Ovary (tissue), 10 donors: ENCODE measurements at regions of chr13 and their contacts with region 1.

Region 1: DNA sequence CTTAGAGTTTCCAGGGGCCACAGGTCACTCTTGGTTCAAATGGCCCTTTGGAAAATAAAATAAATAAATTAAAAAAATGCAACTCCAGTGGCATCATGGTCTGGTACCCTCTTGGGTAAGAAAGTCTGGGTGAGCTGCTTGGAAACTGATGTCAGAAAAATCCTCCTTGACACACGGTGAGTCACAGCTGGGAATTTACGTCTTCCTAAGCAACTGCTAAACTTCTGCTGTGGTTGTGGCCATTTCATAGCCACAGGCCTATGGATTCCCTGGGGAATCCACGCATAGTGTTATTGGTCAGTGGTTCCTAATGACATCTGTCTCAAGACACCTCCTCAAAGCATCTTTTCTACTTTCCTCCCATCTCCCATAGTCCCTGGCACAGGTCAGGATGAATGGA is 220.8 kb downstream of the COG6 start:
- DNase-seq: no peak
- H3K4me3 ChIP-seq: no peak overlapping the region
- H3K27ac ChIP-seq: peak overlapping the region in 1 of 2 donors; percentile 11
- H3K4me1 ChIP-seq: peaks cover 12% of the 10 kb centered on the region
- H3K27me3 ChIP-seq: no peaks in the 10 kb centered on the region
- CTCF ChIP-seq: no peak
- EP300 ChIP-seq: no peak
- POLR2A ChIP-seq: no peak

Region 2: GRCh38 chr13:39823063-39823713 is 53.1 kb before region 1 on chr13:
- intact Hi-C with region 1: loop called in 1 of 4 experiments (anchors 10 kb)
- DNase-seq: no peak
- H3K4me3 ChIP-seq: no peak overlapping the region
- H3K27ac ChIP-seq: no peak overlapping the region
- H3K4me1 ChIP-seq: peaks cover 1% of the 10 kb centered on the region
- H3K27me3 ChIP-seq: no peaks in the 10 kb centered on the region
- CTCF ChIP-seq: no peak
- EP300 ChIP-seq: no peak
- POLR2A ChIP-seq: no peak